BJ (cell line): ENCODE measurements at regions of chr3 and their contacts with region 1.

Region 1: DNA sequence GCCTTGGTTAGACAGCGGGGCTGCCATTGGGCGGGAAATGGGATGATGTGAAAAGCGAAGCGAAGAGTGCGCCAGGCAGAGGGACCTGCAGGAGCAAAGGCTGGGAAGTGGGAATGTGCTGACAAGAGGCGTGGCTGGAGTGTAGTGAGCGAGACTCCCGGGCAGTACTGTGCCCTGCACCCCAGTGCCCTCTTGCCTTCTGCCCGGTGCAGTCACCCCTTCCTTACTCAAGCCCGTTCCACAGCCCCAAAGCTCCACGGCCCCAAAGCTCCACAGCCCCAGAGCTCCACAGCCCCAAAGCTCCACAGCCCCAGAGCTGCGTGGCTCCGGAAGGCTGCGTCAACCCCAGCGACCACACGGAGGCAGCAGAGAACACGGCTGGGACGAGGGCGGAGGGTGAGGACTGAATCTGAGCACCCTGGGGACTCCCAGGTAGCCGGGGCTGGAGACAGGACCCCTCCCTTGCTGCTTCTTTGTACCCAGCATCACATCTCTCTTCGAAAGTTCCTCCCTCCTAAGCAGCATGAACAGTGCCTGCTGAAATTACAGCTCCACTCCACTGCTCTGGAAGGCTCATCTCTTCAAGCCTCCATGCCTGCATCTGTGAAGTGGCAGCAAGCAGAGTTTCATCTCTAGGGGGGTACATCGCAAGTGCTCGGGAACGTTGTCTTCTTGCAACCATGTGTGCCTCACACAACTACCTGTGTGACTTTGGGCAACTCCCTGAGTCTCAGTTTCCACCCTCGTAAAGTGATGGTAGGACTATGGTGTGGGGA is 108.9 kb downstream of the FBLN2 start:
- DNase-seq: no peak
- H3K4me3 ChIP-seq: no peak overlapping the region
- H3K27me3 ChIP-seq: peaks cover 12% of the 10 kb centered on the region
- CTCF ChIP-seq: peak; percentile 97

Region 2: GRCh38 chr3:13091898-13092611 is 565.8 kb before region 1 on chr3:
- CTCF ChIA-PET with region 1: interaction called, 14 read pairs
- POLR2A ChIA-PET with region 1: no interaction called
- DNase-seq: peak; percentile 8
- H3K4me3 ChIP-seq: no peak overlapping the region
- H3K27me3 ChIP-seq: peaks cover 4% of the 10 kb centered on the region; the same call in 1 of the 2 replicates
- CTCF ChIP-seq: peak; percentile 96

Region 3: GRCh38 chr3:13466781-13467180 is 191.1 kb before region 1 on chr3:
- CTCF ChIA-PET with region 1: no interaction called
- POLR2A ChIA-PET with region 1: no interaction called
- DNase-seq: no peak
- H3K4me3 ChIP-seq: no peak overlapping the region
- H3K27me3 ChIP-seq: peaks cover 12% of the 10 kb centered on the region
- CTCF ChIP-seq: no peak

Region 4: DNA sequence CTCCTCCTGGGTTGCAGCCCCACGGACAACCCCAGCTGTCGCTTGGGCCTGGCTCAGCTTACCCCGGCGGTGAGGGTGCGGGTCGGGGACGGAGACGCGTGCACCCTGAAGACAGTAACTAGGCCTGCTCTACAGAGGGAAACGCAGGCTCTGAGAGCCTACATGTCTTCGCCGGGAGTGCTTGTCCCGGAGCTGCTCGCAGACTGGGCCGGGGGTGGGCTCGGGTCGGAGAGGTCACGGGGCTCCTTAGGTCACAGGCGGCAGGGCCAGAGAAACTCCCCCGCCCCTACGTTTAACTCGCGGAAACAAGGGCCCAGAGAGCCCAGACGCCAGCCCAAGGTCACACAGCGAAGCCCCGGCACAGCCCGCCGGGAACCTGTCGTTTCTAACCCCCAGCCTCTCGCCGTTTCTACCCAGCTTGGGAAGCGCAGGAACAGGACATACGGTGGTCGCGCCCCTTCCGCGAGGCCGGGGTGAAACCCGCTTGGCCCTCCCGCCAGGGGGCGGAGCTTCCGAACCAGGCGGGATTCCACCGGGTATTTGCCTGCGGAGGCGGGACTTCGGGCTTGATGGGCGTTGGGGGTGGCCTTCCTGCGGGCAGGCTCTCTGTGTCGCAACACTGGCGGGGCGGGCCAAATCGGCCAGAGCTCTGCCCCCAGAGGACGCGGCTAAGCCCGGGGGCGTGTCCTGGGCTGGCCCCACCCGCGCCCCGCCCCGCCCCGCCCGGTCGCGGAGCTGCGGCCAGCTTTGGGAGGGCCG is 178.1 kb before region 1 on chr3 and contains the start of gene HDAC11:
- CTCF ChIA-PET with region 1: interaction called, 16 read pairs
- POLR2A ChIA-PET with region 1: no interaction called
- DNase-seq: peak; percentile 78
- H3K4me3 ChIP-seq: peak within 1 kb of the TSS; percentile 68
- H3K27me3 ChIP-seq: 0 out of 2 replicates have a peak, but pooled peaks cover under 1% of the 10 kb centered on the region
- CTCF ChIP-seq: 0 out of 2 replicates have a peak, but pooled peaks have one; percentile 14
- polyA plus RNA-seq, gene HDAC11: 9.8 and 16.0 TPM in 2 replicates

Region 5: DNA sequence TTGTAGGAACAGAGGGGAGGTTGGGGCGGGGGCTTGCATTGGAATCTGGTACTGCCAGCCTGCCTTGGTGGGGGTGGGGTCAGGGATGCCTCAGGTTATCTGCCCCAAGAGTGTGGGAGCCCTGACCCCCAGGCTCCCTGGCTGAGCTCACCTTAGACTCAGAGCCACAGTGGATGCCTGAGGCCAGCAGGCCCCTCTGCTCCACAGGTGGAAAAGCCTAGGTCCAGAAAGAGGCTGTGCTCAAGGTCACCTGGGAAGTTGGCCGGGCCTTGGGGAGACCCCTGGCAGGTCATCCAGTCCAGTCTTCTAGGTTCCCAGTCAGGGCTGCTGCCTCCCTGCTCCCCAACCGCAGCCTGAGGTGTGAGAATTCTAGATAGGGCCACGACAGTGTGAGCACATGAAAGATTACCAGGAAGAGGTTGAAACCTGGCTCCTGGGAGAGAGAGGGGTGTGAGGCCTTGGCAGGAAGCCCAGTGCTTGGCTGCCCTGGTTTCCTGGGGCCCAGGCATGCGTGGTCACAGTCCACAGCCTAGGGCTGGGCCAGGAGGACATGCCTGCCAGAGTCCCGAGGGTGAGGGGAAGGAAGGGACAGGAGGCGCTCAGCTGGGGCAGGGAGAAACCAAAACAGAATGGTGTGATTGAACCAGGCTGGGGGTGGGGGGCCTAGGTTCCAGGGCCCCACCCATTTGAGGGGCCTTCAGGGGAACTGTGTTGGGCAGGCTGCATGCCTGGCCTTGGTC is 172.8 kb before region 1 on chr3:
- CTCF ChIA-PET with region 1: interaction called, 50 read pairs
- POLR2A ChIA-PET with region 1: no interaction called
- DNase-seq: no peak
- H3K4me3 ChIP-seq: no peak overlapping the region
- H3K27me3 ChIP-seq: no peaks in the 10 kb centered on the region
- CTCF ChIP-seq: no peak

Region 6: DNA sequence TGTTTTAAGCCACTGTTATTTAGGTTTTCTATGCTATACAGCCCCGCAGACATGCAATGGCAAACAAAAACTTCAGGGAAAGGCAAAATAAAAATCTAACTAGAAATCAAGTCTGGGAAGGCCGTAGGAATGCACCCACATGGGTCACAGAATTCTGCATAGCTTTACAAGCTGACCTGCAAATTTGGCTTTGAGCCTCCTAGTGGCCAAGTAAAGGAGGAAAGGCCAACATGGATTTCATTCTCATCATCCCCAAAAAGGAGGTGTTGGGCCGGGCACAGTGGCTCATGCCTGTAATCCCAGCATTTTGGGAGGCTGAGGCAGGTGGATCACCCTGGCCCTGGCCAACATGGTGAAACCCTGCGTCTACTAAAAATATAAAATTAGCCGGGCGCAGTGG is 15.4 kb after region 1 on chr3:
- CTCF ChIA-PET with region 1: interaction called, 40 read pairs
- POLR2A ChIA-PET with region 1: no interaction called
- DNase-seq: no peak
- H3K4me3 ChIP-seq: no peak overlapping the region
- H3K27me3 ChIP-seq: no peaks in the 10 kb centered on the region; the same call in none of the 2 replicates
- CTCF ChIP-seq: peak; percentile 38; the same call in 1 of the 2 replicates

Region 7: GRCh38 chr3:13884851-13885703 is 227.2 kb after region 1 on chr3:
- CTCF ChIA-PET with region 1: interaction called, 21 read pairs
- POLR2A ChIA-PET with region 1: no interaction called
- DNase-seq: no peak
- H3K4me3 ChIP-seq: no peak overlapping the region
- H3K27me3 ChIP-seq: peaks cover 21% of the 10 kb centered on the region
- CTCF ChIP-seq: peak; percentile 46; the same call in 1 of the 2 replicates